Activated CD4-positive, alpha-beta T cell treated with anti-CD3 and anti-CD28 coated beads, Interleukin-2, amount 10 ng/mL, durations not matched to agents 24 days and 14 days (primary cell): ENCODE measurements at regions of chr7 and their contacts with region 1.

Region 1: GRCh38 chr7:129611246-129612111 is at the start of gene NRF1:
- DNase-seq: peak; percentile 98
- H3K4me3 Mint-ChIP-seq: peak within 1 kb of the TSS; percentile 93
- H3K27ac Mint-ChIP-seq: peak within 1 kb of the TSS; percentile 95
- H3K4me1 Mint-ChIP-seq: peaks cover 46% of the 10 kb centered on the region
- H3K27me3 Mint-ChIP-seq: no peaks in the 10 kb centered on the region
- total RNA-seq, gene NRF1: 22.3 and 23.2 TPM in 2 replicates

Region 2: GRCh38 chr7:129367700-129368388 is 243.6 kb before region 1 on chr7:
- intact Hi-C with region 1: loop called (anchors 5 kb)
- DNase-seq: peak; percentile 93
- H3K4me3 Mint-ChIP-seq: peak overlapping the region; percentile 73
- H3K27ac Mint-ChIP-seq: peak overlapping the region; percentile 89
- H3K4me1 Mint-ChIP-seq: peaks cover 37% of the 10 kb centered on the region
- H3K27me3 Mint-ChIP-seq: no peaks in the 10 kb centered on the region

Region 3: DNA sequence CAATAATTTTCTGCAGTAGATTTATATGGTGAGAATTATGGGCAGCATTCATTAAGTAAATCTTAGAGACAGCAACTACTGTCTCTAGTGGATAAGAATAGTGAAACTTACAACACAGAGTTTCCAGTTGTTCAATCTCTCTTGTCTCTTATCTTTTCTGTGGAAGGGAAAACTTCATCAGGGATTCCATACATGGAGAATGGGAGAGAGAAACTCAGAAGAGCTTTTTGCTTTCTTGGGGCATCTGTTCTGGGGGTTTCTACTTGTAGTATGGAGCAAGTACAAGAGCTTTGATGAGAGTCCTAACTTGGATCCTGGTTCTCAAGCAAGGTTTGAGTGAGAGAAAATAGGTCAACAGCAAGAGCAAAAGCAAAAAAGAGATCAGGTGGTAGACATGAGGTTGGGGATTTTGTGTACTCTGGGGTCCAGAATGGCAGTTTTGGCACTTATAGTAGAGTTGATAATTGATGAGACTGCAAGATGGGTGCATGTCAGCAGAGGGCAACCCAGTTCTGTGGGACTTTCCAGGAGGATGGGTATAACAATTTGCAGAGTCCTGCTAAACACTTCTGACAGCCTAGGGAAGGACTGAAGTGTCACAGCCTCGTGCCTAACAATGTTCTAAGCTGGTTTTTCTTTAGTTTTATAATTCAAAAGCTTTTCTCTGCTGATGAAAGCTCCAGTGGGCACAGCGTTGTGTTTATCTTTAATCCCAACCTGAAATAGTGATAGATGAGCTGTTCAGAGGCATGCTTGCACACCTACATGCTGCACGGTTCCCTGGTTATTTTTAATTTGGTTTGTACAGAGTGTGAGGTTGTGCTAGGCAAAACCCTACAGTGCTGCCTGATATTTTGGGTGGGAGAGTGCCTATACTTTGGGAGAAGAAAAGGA is 209.3 kb before region 1 on chr7:
- intact Hi-C with region 1: no loop called
- DNase-seq: peak; percentile 73
- H3K4me3 Mint-ChIP-seq: no peak overlapping the region
- H3K27ac Mint-ChIP-seq: peak overlapping the region; percentile 6
- H3K4me1 Mint-ChIP-seq: peaks cover 20% of the 10 kb centered on the region
- H3K27me3 Mint-ChIP-seq: no peaks in the 10 kb centered on the region

Region 4: GRCh38 chr7:129502376-129502776 is 109.1 kb before region 1 on chr7 and contains the start of gene SMKR1:
- intact Hi-C with region 1: loop called (anchors 2 kb)
- DNase-seq: peak; percentile 98
- H3K4me3 Mint-ChIP-seq: peak within 1 kb of the TSS; percentile 84
- H3K27ac Mint-ChIP-seq: peak within 1 kb of the TSS; percentile 84
- H3K4me1 Mint-ChIP-seq: peaks cover 22% of the 10 kb centered on the region
- H3K27me3 Mint-ChIP-seq: peaks cover 9% of the 10 kb centered on the region
- total RNA-seq, gene SMKR1: 5.9 and 6.1 TPM in 2 replicates

Region 5: GRCh38 chr7:129635300-129636029 is 24.0 kb after region 1 on chr7:
- intact Hi-C with region 1: loop called (anchors 1 kb)
- DNase-seq: peak; percentile 91
- H3K4me3 Mint-ChIP-seq: no peak overlapping the region
- H3K27ac Mint-ChIP-seq: peak overlapping the region; percentile 9
- H3K4me1 Mint-ChIP-seq: peaks cover 19% of the 10 kb centered on the region
- H3K27me3 Mint-ChIP-seq: no peaks in the 10 kb centered on the region